Heart right ventricle (tissue), 16 donors: ENCODE measurements at regions of chr7 and their contacts with region 1.

Region 1: DNA sequence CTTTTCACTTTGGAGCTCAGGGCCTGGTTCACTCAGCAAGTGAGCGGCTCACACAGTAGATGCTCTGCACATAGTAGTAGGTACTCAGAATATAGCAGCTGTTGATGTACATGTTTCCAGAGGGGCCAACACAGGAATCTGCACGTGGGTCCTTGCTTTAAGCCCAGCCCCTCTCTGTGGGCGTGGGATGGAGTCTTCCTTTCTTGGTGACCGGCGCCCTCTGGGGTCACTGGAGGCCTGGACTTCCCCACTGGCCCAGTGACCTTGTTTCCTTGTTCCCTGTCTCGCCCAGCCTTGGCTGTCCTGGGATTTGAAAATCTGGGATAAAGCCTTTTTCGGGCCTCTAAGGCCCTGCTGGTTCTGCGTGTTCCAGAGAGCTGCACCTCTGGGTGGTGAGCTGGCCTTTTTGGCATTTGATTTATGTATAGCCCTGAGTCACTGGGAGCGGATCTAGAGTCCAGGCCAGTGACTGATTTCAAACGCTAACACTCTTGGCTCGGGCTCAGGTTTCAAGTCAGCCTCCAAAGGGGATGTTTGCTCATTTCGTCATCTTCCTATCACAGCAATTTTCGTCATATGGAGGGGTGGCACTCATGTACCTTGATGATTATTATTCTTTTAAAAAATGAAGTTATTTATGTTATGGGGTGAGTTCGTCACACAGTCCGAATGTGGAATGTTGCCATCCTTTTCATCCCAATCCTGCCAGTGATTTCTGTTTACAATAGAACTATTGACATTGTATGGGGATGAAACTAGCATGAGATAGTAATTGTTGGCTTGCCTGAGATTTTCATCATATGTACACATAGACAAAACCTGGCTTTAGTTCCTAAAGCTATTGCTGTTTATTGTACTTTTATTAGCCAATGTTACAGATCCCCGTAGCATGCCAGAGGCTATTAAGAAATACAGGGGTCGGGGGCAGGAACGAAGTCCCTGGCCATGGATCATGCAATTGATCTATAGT is 65.5 kb downstream of the CUX1 start:
- DNase-seq: peak; percentile 68 to 87
- ATAC-seq: peak; percentile 87 to 96 (median 92)
- H3K4me3 ChIP-seq: peak overlapping the region in 1 of 10 donors; percentile 6
- H3K27ac ChIP-seq: peak overlapping the region; percentile 47 to 92 (median 88)
- H3K4me1 ChIP-seq: peaks cover 17 to 84% (median 63%) of the 10 kb centered on the region in 9 donors
- H3K27me3 ChIP-seq: no peaks in the 10 kb centered on the region
- CTCF ChIP-seq: peak in 3 of 9 donors; percentile 19 to 32 (median 30)

Region 2: DNA sequence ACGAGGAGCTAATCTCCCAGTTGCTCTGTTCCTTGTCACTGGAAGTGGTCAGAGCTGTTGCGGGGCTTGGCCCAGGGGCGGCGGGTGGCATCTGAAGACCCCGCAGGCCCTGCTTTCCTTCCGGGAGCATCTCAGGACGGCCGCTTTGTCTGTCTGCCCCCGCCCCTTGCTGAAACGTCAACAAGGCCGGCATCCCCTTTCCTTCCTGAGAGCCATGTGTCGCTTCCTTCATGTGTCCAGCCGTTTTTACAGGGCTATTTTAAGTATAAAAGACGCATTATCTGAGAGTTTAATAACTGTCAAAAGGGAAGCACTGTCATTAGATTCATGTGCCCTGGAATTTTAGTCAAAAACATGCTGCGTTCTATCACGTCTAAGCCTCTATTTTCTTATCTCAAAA is 44.9 kb after region 1 on chr7:
- intact Hi-C with region 1: loop called in 1 of 10 experiments (anchors 5 kb)
- DNase-seq: peak in 1 of 2 donors; percentile 64
- ATAC-seq: peak in 7 of 8 donors; percentile 18 to 62 (median 53)
- H3K4me3 ChIP-seq: peak overlapping the region in 4 of 10 donors; percentile 0 to 27 (median 10)
- H3K27ac ChIP-seq: peak overlapping the region in 9 of 10 donors; percentile 33 to 87 (median 71)
- H3K4me1 ChIP-seq: peaks cover 5 to 44% (median 27%) of the 10 kb centered on the region in 9 donors
- H3K27me3 ChIP-seq: no peaks in the 10 kb centered on the region
- CTCF ChIP-seq: no peak

Region 3: DNA sequence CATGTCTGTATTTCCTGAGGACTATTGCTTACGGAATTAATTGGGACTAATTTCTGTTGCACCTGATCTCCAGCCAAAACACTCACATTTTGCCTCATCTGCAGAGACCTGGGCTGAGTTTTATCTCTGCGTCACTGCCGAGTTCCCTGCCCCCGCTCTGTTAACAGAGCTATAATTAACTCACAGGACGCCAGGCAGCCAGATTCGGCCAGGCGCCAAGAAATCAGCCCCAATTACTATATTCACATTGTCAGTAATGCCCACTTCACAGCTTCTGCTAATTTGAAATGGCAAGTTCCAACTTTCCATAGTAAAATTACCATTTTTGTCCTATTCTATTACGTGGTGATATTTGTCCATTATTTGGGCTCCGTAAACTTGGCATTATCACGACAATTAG is 65.0 kb after region 1 on chr7:
- intact Hi-C with region 1: loop called in 1 of 10 experiments (anchors 5 kb)
- DNase-seq: peak; percentile 77 to 85
- ATAC-seq: peak in 7 of 8 donors; percentile 40 to 81 (median 79)
- H3K4me3 ChIP-seq: no peak overlapping the region
- H3K27ac ChIP-seq: peak overlapping the region; percentile 63 to 87 (median 76)
- H3K4me1 ChIP-seq: peaks cover 15 to 82% (median 58%) of the 10 kb centered on the region in 9 donors
- H3K27me3 ChIP-seq: no peaks in the 10 kb centered on the region
- CTCF ChIP-seq: no peak